ENCODE measurements at regions of chr9 and their contacts with region 1.

Region 1: GRCh38 chr9:129177791-129178559 is at the start of gene IER5L:
- DNase-seq: peak; percentile 96 to 98 (median 98)
- ATAC-seq: peak; percentile 86 to 88
- H3K4me3 ChIP-seq: peak within 1 kb of the TSS; percentile 72
- H3K27ac ChIP-seq: peak within 1 kb of the TSS; percentile 90
- H3K4me1 ChIP-seq: no peaks in the 10 kb centered on the region
- H3K27me3 ChIP-seq: no peaks in the 10 kb centered on the region
- total RNA-seq, gene IER5L: 6.7 to 9.4 (median 8.7) TPM

Region 2: DNA sequence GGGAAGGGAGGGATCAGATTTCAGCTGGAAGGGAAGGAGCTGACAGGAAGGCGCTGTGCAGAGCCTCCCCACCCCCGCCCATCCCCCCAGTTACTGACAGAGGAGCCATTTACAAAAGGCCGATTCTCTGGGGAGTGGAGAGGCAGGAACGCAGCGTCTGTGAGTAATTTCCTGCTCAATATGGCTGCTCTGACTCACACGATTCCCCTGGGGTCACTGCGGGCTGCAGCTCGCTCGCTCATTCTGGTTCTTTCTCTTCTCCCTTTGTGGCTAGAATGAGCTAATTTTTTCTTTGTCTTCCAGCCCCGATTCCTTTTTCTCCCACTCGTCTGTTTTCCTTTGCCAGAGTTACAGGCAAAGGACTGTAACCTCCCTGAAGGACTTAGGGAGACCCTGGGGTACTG is 38.0 kb before region 1 on chr9:
- intact Hi-C with region 1: loop called in 2 of 4 experiments (anchors 2 to 5 kb)
- DNase-seq: peak; percentile 94 to 96 (median 95)
- ATAC-seq: peak; percentile 79 to 81
- H3K4me3 ChIP-seq: peak overlapping the region; percentile 3
- H3K27ac ChIP-seq: peak overlapping the region; percentile 96
- H3K4me1 ChIP-seq: peaks cover 26% of the 10 kb centered on the region
- H3K27me3 ChIP-seq: no peaks in the 10 kb centered on the region

Region 3: GRCh38 chr9:129320575-129321263 is 142.7 kb after region 1 on chr9:
- intact Hi-C with region 1: loop called in 1 of 4 experiments (anchors 5 kb)
- DNase-seq: peak; percentile 67 to 91 (median 88)
- ATAC-seq: peak; percentile 81
- H3K4me3 ChIP-seq: peak overlapping the region; percentile 17
- H3K27ac ChIP-seq: peak overlapping the region; percentile 88
- H3K4me1 ChIP-seq: peaks cover 5% of the 10 kb centered on the region
- H3K27me3 ChIP-seq: no peaks in the 10 kb centered on the region

Region 4: GRCh38 chr9:129333953-129334724 is 156.2 kb after region 1 on chr9:
- intact Hi-C with region 1: loop called in 2 of 4 experiments (anchors 5 kb)
- DNase-seq: peak; percentile 94 to 98 (median 97)
- ATAC-seq: peak; percentile 93 to 94
- H3K4me3 ChIP-seq: peak overlapping the region; percentile 11
- H3K27ac ChIP-seq: peak overlapping the region; percentile 85
- H3K4me1 ChIP-seq: peaks cover 14% of the 10 kb centered on the region
- H3K27me3 ChIP-seq: no peaks in the 10 kb centered on the region

Region 5: DNA sequence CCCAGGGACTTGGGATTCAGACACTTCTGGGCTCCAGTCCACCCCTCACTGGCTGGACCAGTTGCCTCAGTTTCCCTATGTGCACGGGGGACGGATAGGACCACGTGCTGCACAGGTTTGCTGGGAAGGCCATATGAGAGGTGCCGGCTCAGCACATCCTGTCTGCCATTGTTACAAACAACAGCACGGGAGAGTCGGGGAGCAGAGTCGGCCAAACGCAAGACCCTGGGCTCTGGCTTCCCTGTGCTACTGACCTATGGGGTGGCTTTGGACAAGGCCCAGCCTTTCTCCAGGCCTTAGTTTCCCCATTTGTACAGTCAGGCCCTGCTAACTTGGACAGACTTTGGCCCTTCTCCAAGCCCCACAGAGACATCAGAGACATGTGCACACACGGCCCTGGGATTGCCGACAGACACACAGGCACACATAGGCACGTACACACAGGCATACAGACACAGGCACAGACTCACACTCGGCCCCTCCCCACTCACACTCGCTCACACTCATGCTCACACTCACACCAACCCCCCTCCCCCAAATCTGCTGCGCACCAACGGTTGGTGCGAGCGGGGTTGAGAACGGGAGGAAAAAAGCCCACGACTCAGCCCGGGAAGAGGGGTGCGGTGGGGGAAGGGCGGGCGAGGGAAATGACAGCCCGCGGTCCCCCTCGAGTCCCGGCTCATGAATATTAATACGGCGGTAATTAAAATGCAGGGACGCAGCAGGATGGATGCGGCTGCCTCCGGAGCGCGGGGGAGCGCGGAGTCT is 309.9 kb after region 1 on chr9:
- intact Hi-C with region 1: loop called in 2 of 4 experiments (anchors 5 to 10 kb)
- DNase-seq: peak; percentile 74 to 88 (median 85)
- ATAC-seq: peak; percentile 1 to 4
- H3K4me3 ChIP-seq: peak overlapping the region; percentile 63
- H3K27ac ChIP-seq: peak overlapping the region; percentile 86
- H3K4me1 ChIP-seq: peaks cover 28% of the 10 kb centered on the region
- H3K27me3 ChIP-seq: no peaks in the 10 kb centered on the region

Region 6: GRCh38 chr9:129610473-129611301 is 432.7 kb after region 1 on chr9:
- intact Hi-C with region 1: loop called in 3 of 4 experiments (anchors 10 kb)
- DNase-seq: peak; percentile 81 to 94 (median 93)
- ATAC-seq: peak; percentile 33 to 61
- H3K4me3 ChIP-seq: peak overlapping the region; percentile 66
- H3K27ac ChIP-seq: peak overlapping the region; percentile 78
- H3K4me1 ChIP-seq: peaks cover 3% of the 10 kb centered on the region
- H3K27me3 ChIP-seq: no peaks in the 10 kb centered on the region

Measured in right cardiac atrium (tissue), 5 donors.